ENCODE measurements at regions of chr1 and their contacts with region 1.

Region 1: DNA sequence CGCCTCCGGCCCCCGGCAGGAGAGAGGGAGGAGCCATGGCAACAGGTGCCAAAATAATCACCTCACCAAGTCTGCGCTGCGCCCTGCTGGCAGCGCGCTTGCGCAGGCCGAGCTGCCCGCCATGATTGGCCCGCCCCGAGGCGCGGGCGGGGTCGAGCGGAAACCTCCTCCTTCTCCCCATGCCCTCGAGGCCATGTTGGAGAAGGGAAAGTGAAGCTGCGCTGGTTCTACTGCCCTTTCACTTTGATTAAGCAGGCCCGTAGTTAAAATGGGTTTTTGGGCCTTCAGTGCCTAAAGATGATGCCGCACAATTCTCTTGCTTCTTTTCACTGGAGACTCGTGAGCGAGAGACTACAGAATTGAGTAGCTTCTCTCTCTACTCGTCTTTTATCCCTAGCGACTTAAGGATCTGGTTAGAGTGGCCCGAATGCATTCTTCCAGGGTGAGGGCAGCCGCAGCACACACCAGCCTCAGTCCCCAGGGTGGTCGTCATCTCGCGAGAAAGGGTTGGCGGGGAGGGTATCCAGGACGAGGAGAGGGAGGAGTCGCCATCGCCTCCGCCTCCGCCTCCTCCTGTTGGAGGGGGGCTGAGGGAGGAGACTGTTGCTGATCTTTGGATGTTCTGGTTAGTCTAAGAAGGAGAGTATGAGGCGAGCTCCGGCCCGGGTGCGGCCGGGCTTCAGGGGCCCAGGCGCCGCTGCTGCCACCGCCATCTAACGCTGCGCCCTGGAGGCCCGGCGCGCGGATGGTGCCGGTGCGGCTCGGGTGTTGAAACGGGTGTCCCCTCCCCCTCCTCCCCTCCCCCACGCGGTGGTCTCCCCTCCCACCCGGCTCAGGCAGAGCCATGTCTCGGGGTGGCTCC is at the start of gene DCAF6:
- DNase-seq: peak; percentile 96 to 98
- ATAC-seq: peak; percentile 89 to 94 (median 92)
- H3K4me3 ChIP-seq: peak within 1 kb of the TSS; percentile 84
- H3K27ac ChIP-seq: peak within 1 kb of the TSS; percentile 96
- H3K4me1 ChIP-seq: peaks cover 36% of the 10 kb centered on the region
- H3K27me3 ChIP-seq: no peaks in the 10 kb centered on the region
- CTCF ChIP-seq: no peak
- total RNA-seq, gene DCAF6: 259 to 396 (median 327) TPM

Region 2: DNA sequence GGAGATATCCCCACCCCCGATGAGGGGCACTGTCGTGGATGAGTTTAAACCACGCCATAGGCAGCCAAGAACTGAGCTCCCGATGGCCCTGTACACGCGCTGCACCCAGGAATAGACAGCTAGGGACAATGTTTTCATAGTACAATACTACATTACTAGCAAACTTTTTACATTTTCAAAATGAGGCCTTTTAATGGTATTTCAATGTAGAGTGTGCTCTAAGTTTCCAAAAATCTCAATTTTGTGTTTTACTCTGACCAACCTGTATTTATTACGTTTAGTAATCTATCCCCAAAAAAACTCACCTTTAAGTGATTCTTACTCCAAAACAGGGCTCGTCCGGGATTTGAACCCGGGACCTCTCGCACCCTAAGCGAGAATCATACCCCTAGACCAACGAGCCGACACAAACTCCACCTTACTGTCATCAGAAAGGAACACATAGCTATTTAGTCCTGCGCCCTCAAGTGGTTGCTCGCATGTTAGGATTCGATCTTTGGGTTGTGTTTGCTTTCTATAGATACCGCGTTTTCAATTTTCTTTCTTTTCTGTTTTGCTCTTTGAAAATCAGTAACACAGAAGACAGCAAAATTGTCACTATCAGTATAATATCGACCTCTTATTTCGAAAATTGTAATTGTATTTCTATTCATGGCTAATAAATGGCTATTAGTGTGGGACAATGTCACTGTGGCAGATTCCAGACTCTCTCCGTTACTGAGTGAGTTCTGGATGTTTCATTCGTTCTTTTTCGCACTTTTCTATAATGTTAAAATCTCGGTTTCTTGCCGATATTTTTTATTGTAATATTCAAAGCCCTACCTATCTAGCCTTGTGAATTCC is 220.9 kb before region 1 on chr1:
- intact Hi-C with region 1: loop called in 1 of 2 experiments (anchors 10 kb)
- DNase-seq: peak; percentile 72 to 85
- ATAC-seq: peak; percentile 62 to 81 (median 70)
- H3K4me3 ChIP-seq: peak overlapping the region; percentile 82
- H3K27ac ChIP-seq: peak overlapping the region; percentile 97
- H3K4me1 ChIP-seq: no peaks in the 10 kb centered on the region
- H3K27me3 ChIP-seq: no peaks in the 10 kb centered on the region
- CTCF ChIP-seq: peak; percentile 80

Region 3: GRCh38 chr1:168045311-168045710 is 109.0 kb after region 1 on chr1:
- intact Hi-C with region 1: loop called (anchors 5 to 10 kb)
- DNase-seq: no peak
- ATAC-seq: peak in 2 of 4 donors; percentile 39 to 63
- H3K4me3 ChIP-seq: no peak overlapping the region
- H3K27ac ChIP-seq: peak overlapping the region; percentile 31
- H3K4me1 ChIP-seq: peaks cover 21% of the 10 kb centered on the region
- H3K27me3 ChIP-seq: no peaks in the 10 kb centered on the region
- CTCF ChIP-seq: no peak

Region 4: GRCh38 chr1:168054117-168054516 is 117.8 kb after region 1 on chr1:
- intact Hi-C with region 1: loop called (anchors 5 to 10 kb)
- DNase-seq: no peak
- ATAC-seq: peak; percentile 58 to 80 (median 76)
- H3K4me3 ChIP-seq: peak overlapping the region; percentile 12
- H3K27ac ChIP-seq: peak overlapping the region; percentile 78
- H3K4me1 ChIP-seq: peaks cover 42% of the 10 kb centered on the region
- H3K27me3 ChIP-seq: no peaks in the 10 kb centered on the region
- CTCF ChIP-seq: no peak